Breast epithelium (tissue), 4 donors: ENCODE measurements at regions of chr1 and their contacts with region 1.

Region 1: DNA sequence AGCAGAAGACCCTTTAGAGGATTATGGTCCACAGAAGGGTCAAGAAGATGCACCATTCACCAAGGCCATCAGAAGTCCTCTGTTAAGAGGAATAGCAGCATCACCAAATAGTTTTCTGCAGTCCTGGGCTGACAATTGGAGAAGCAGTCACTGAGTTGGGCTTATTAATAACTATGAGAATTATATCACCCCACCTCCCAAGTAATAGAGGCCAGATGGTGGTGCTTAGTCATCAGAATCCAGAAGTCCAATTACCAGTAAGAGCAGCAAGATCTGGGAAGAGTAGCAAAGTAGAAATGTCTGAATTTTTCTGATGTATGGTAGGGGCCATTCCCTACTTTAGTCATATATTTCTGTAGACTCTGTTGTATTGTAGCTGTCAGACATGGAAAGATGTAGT is 6.1 kb upstream of the PSMA5 start:
- DNase-seq: no peak
- H3K4me3 ChIP-seq: no peak overlapping the region
- H3K27ac ChIP-seq: no peak overlapping the region
- H3K4me1 ChIP-seq: no peaks in the 10 kb centered on the region
- H3K27me3 ChIP-seq: no peaks in the 10 kb centered on the region
- CTCF ChIP-seq: no peak
- POLR2A ChIP-seq: no peak

Region 2: GRCh38 chr1:109783429-109783831 is 351.1 kb after region 1 on chr1:
- intact Hi-C with region 1: loop called (anchors 5 kb)
- DNase-seq: peak; percentile 66 to 67
- H3K4me3 ChIP-seq: no peak overlapping the region
- H3K27ac ChIP-seq: peak overlapping the region; percentile 70 to 83
- H3K4me1 ChIP-seq: peaks cover 6 to 12% of the 10 kb centered on the region in 2 donors
- H3K27me3 ChIP-seq: no peaks in the 10 kb centered on the region
- CTCF ChIP-seq: no peak
- POLR2A ChIP-seq: no peak